ENCODE measurements at regions of chr13 and their contacts with region 1.

Region 1: GRCh38 chr13:30673669-30674521 is 56.2 kb downstream of the USPL1 start:
- DNase-seq: peak; percentile 92
- ATAC-seq: peak; percentile 96

Region 2: GRCh38 chr13:30301827-30302226 is 372.1 kb before region 1 on chr13:
- intact Hi-C with region 1: no loop called
- DNase-seq: no peak
- ATAC-seq: no peak

Region 3: DNA sequence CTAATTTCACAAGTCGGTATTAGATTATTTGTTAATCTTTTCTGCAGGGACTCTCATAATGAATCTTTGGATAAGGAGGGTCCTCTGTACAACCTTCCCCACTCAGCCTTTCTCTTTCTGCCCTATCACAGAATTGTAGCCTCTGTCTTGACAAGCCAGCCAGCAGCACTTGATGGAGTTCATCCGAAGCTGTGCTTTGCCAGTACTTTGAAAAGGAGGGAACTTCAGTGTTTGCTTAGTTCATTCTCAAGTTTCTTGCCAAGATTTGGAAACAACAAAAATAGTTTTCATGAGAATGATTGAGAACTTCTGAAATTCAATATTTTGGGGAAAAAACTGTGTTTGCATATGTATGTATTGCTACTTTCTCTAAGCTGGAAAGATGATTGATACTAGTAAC is 138.8 kb before region 1 on chr13:
- intact Hi-C with region 1: no loop called
- DNase-seq: no peak
- ATAC-seq: no peak

Region 4: DNA sequence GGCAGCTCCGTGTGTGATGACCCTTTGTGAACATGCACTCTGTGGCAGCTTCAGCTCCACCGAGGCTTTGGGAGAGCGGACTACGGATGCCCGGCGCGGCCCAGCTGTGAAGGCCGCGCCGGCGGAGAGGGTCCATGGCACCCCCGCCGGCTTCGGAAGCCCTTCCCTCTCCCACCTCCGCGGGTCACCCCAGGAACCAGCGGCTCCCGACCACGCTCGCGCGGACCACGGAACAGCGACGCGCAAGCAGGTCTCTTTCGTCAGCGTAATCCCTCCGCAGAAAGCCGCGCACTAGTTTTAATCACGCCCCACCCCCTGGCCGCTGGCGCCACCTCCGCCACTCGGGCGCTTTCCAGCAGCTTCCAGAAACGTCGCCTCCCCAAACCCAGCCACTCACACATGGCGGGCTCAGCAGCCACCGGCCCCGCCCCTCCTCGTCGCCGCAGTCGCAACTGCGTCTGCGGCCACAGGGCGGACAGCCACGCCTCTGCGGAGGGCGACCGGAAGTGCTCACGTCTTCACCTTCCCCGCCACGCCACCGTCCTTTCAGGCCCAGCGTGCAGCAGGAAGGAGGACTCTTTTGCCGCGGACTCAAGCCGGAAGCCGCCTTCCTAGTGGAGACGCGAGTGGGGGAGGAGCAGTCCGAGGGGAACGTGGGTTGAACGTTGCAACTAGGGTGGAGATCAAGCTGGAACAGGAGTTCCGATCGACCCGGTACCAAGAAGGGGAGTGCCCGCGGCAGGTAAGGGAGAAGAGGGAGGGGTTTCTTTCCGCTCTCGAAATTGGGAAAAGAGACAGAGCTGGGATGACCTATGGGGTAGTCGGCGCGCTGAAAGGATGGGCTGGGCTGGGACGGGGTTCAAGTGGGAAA is 56.3 kb before region 1 on chr13 and contains the start of gene USPL1:
- intact Hi-C with region 1: loop called (anchors 5 kb)
- DNase-seq: peak; percentile 99
- ATAC-seq: peak; percentile 96
- total RNA-seq, gene USPL1: 8.8 TPM

Region 5: GRCh38 chr13:30802953-30803478 is 129.1 kb after region 1 on chr13:
- intact Hi-C with region 1: loop called (anchors 2 kb)
- DNase-seq: peak; percentile 93
- ATAC-seq: peak; percentile 99